Breast epithelium (tissue), 4 donors: ENCODE measurements at regions of chr2 and their contacts with region 1.

Region 1: DNA sequence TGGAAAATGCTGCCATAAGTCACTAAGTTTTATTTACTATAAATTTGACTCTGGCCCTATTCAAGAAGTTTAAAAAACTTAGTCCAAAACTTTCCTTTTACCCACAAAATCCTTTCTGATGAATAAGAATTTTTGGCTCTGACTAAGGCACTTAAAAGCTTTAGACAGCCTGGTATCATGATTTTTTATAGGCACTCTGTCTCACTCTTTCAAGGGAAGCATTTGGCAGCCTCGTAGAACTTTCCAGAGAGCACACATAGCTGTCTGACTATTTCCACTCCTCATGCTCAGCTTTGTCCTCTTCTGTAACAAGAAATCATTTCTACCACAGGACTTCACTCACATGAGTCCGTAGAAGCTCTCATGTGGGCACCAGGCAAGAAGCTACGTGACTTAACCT is 32.3 kb upstream of the XDH start:
- DNase-seq: no peak
- H3K4me3 ChIP-seq: no peak overlapping the region
- H3K27ac ChIP-seq: no peak overlapping the region
- H3K4me1 ChIP-seq: no peaks in the 10 kb centered on the region
- H3K27me3 ChIP-seq: no peaks in the 10 kb centered on the region
- CTCF ChIP-seq: no peak
- POLR2A ChIP-seq: no peak

Region 2: GRCh38 chr2:30584116-30584515 is 862.7 kb before region 1 on chr2:
- intact Hi-C with region 1: no loop called
- DNase-seq: no peak
- H3K4me3 ChIP-seq: no peak overlapping the region
- H3K27ac ChIP-seq: no peak overlapping the region
- H3K4me1 ChIP-seq: no peaks in the 10 kb centered on the region
- H3K27me3 ChIP-seq: no peaks in the 10 kb centered on the region
- CTCF ChIP-seq: no peak
- POLR2A ChIP-seq: no peak

Region 3: GRCh38 chr2:31467418-31467817 is 20.6 kb after region 1 on chr2:
- intact Hi-C with region 1: no loop called
- DNase-seq: peak in 1 of 2 donors; percentile 18
- H3K4me3 ChIP-seq: no peak overlapping the region
- H3K27ac ChIP-seq: no peak overlapping the region
- H3K4me1 ChIP-seq: no peaks in the 10 kb centered on the region
- H3K27me3 ChIP-seq: no peaks in the 10 kb centered on the region
- CTCF ChIP-seq: no peak
- POLR2A ChIP-seq: no peak

Region 4: GRCh38 chr2:31526946-31527732 is 80.3 kb after region 1 on chr2:
- intact Hi-C with region 1: loop called (anchors 5 kb)
- DNase-seq: no peak
- H3K4me3 ChIP-seq: no peak overlapping the region
- H3K27ac ChIP-seq: no peak overlapping the region
- H3K4me1 ChIP-seq: no peaks in the 10 kb centered on the region
- H3K27me3 ChIP-seq: no peaks in the 10 kb centered on the region
- CTCF ChIP-seq: no peak
- POLR2A ChIP-seq: no peak

Region 5: GRCh38 chr2:32212295-32212694 is 765.4 kb after region 1 on chr2:
- intact Hi-C with region 1: loop called (anchors 5 kb)
- DNase-seq: no peak
- H3K4me3 ChIP-seq: no peak overlapping the region
- H3K27ac ChIP-seq: no peak overlapping the region
- H3K4me1 ChIP-seq: no peaks in the 10 kb centered on the region
- H3K27me3 ChIP-seq: no peaks in the 10 kb centered on the region
- CTCF ChIP-seq: no peak
- POLR2A ChIP-seq: no peak